ENCODE measurements at regions of chr11 and their contacts with region 1.

Region 1: DNA sequence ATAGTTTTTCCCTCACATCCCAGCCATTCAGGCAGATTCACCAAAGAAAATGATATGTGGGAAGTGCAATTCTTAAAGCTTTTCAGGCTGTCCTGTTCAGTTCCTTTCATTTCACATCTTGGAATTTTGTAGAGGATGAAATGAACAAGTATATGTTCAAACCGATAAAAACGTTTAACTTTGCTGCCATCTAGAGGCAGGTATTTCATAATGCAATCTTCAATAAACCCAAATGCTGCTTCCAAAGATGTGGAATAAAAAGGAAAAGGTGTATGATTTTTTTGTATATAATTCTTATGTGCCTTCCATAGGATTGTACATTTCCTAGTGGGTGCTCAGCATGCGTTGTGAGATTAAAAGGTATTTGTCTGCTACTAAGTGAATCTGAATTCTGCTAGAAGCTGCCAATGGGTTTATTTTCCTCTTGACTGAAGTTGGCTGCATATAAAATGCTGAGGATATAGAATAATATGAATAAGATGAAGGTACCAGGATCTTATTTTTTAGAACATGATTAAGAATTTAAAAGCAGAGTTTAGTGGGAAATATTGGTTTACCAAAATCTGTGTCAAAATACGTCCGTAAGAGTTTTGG is 199.3 kb downstream of the PGR start:
- DNase-seq: peak; percentile 9 to 68 (median 22)
- ATAC-seq: peak; percentile 78
- H3K4me3 ChIP-seq: no peak overlapping the region
- H3K27ac ChIP-seq: no peak overlapping the region
- H3K4me1 ChIP-seq: no peaks in the 10 kb centered on the region
- H3K27me3 ChIP-seq: no peaks in the 10 kb centered on the region
- CTCF ChIP-seq: peak; percentile 29 to 68 (median 48); a peak in 5 of 6 replicates
- EP300 ChIP-seq: no peak
- POLR2A ChIP-seq: no peak
- RAD21 ChIP-seq: peak; percentile 62 to 76

Region 2: GRCh38 chr11:100575870-100576705 is 354.2 kb before region 1 on chr11:
- CTCF ChIA-PET with region 1: interaction called, 16 read pairs
- POLR2A ChIA-PET with region 1: no interaction called
- in situ Hi-C with region 1: loop called (anchors 10 kb)
- intact Hi-C with region 1: loop called (anchors 1 kb)
- DNase-seq: peak; percentile 27 to 53 (median 42)
- ATAC-seq: peak; percentile 80
- H3K4me3 ChIP-seq: no peak overlapping the region
- H3K27ac ChIP-seq: no peak overlapping the region
- H3K4me1 ChIP-seq: no peaks in the 10 kb centered on the region
- H3K27me3 ChIP-seq: no peaks in the 10 kb centered on the region
- CTCF ChIP-seq: peak; percentile 43 to 78 (median 57); a peak in 4 of 6 replicates
- EP300 ChIP-seq: no peak
- POLR2A ChIP-seq: no peak
- RAD21 ChIP-seq: peak; percentile 90 to 92

Region 3: DNA sequence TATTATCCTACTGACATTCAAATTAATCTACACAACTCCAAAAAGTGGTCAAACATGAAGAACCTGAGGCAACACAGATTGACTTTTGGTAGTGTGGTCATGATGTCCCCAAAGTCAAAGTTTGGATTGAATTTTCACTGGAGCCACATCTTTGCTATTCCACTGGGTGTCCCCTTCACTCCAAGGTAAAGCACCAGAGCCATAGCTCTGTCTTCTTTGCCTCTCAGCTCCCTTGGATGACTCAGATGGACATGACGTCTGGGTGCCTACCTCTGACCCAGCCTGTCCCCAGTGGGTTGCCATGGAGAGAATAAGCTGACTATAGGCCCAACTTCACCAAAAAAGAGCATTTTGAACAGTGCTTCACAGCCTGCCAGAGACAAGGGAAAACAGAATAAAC is 300.6 kb before region 1 on chr11:
- CTCF ChIA-PET with region 1: no interaction called
- POLR2A ChIA-PET with region 1: interaction called, 4 read pairs
- in situ Hi-C with region 1: no loop called
- intact Hi-C with region 1: loop called (anchors 2 kb)
- DNase-seq: peak in 1 of 4 experiments; percentile 41
- ATAC-seq: peak; percentile 75
- H3K4me3 ChIP-seq: no peak overlapping the region
- H3K27ac ChIP-seq: no peak overlapping the region
- H3K4me1 ChIP-seq: peaks cover 0 to 3% of the 10 kb centered on the region in 2 experiments; a peak in 3 of 5 replicates
- H3K27me3 ChIP-seq: no peaks in the 10 kb centered on the region
- CTCF ChIP-seq: peak in 2 of 3 experiments; percentile 11 to 37; a peak in 1 of 6 replicates
- EP300 ChIP-seq: no peak
- POLR2A ChIP-seq: no peak
- RAD21 ChIP-seq: peak in 1 of 2 experiments; percentile 60; a peak in 3 of 4 replicates

Region 4: DNA sequence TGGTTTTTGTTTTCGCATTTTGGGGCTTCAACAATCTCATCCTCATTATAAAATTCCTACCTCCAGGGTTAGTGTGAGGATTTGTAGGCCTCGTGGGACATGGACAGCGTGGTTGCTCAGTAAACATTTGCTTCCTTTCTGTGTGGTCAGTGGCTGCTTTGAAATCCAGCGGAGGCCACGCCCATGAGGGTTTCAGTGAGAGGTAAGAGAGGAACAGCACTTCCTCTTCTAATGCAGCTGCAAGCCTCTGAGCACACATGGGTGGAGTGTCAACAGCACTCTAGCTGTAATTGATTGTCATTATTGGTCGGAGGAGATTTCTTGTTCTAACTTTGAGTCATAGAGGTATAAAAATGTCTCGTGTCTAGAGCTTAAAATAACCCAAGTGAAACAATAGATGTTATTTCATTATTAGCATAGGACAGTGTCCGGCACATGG is 249.2 kb before region 1 on chr11:
- CTCF ChIA-PET with region 1: no interaction called
- POLR2A ChIA-PET with region 1: no interaction called
- in situ Hi-C with region 1: no loop called
- intact Hi-C with region 1: loop called (anchors 1 kb)
- DNase-seq: peak; percentile 18 to 71 (median 38)
- ATAC-seq: peak; percentile 96
- H3K4me3 ChIP-seq: no peak overlapping the region
- H3K27ac ChIP-seq: peak overlapping the region; percentile 30; the same call in 1 of the 3 replicates
- H3K4me1 ChIP-seq: no peaks in the 10 kb centered on the region; a peak in 2 of 5 replicates
- H3K27me3 ChIP-seq: no peaks in the 10 kb centered on the region
- CTCF ChIP-seq: no peak
- EP300 ChIP-seq: no peak
- POLR2A ChIP-seq: no peak
- RAD21 ChIP-seq: no peak

Region 5: GRCh38 chr11:100753172-100753543 is 177.1 kb before region 1 on chr11:
- CTCF ChIA-PET with region 1: no interaction called
- POLR2A ChIA-PET with region 1: no interaction called
- in situ Hi-C with region 1: no loop called
- intact Hi-C with region 1: loop called (anchors 2 kb)
- DNase-seq: no peak
- ATAC-seq: no peak
- H3K4me3 ChIP-seq: no peak overlapping the region
- H3K27ac ChIP-seq: no peak overlapping the region
- H3K4me1 ChIP-seq: no peaks in the 10 kb centered on the region; a peak in 1 of 5 replicates
- H3K27me3 ChIP-seq: no peaks in the 10 kb centered on the region
- CTCF ChIP-seq: no peak
- EP300 ChIP-seq: no peak
- POLR2A ChIP-seq: no peak
- RAD21 ChIP-seq: no peak

Region 6: GRCh38 chr11:100855466-100856067 is 74.7 kb before region 1 on chr11:
- CTCF ChIA-PET with region 1: no interaction called
- POLR2A ChIA-PET with region 1: no interaction called
- in situ Hi-C with region 1: no loop called
- intact Hi-C with region 1: loop called (anchors 2 kb)
- DNase-seq: peak; percentile 13 to 44 (median 18)
- ATAC-seq: peak; percentile 47; the same call in 1 of the 3 replicates
- H3K4me3 ChIP-seq: no peak overlapping the region
- H3K27ac ChIP-seq: no peak overlapping the region
- H3K4me1 ChIP-seq: no peaks in the 10 kb centered on the region; a peak in 1 of 5 replicates
- H3K27me3 ChIP-seq: no peaks in the 10 kb centered on the region
- CTCF ChIP-seq: peak; percentile 29 to 65 (median 32); a peak in 3 of 6 replicates
- EP300 ChIP-seq: no peak
- POLR2A ChIP-seq: no peak
- RAD21 ChIP-seq: peak; percentile 74 to 75